SK-N-SH (cell line): ENCODE measurements at regions of chr3 and their contacts with region 1.

Region 1: DNA sequence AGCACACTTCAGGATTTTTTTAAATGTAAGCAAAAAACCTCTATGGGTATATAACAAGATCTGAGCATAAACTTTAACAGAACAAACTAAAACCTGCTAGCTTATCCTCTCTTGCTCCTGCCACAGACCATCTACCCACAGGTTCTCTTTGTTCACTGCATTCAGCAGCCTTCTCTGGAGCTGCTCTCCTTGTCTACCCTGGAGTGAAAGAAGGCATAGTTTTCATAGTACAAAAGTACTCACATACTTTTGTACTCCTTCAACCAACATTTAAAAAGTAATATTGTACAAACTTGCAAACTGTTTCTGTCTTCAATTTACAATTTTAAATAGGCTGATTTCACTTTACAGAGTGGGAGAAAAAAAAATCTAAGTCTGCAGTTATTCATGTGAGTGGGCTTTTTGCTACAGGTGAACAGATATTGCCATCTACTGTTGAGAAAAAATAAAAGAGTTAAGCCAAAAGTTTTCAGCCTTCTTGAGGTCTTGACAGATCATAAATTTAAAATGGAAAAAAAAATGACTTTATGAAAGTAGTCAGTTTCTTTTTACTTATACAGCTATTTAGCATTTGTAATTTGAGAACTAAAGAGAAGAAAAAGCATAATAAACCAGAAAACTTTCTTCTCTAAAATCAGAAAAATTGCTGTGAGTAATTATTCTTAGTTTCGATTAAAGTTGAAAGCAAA is 20.4 kb downstream of the TERC start:
- DNase-seq: no peak
- H3K4me3 ChIP-seq: no peak overlapping the region
- H3K27ac ChIP-seq: no peak overlapping the region
- H3K4me1 ChIP-seq: no peaks in the 10 kb centered on the region
- H3K27me3 ChIP-seq: peaks cover 5% of the 10 kb centered on the region; the same call in 1 of the 2 replicates
- CTCF ChIP-seq: peak; percentile 55
- EP300 ChIP-seq: no peak
- RAD21 ChIP-seq: peak; percentile 66

Region 2: GRCh38 chr3:169764452-169765274 is 20.2 kb after region 1 on chr3 and contains the start of gene TERC:
- CTCF ChIA-PET with region 1: interaction called, 13 read pairs
- POLR2A ChIA-PET with region 1: no interaction called
- DNase-seq: peak; percentile 93
- H3K4me3 ChIP-seq: peak within 1 kb of the TSS; percentile 68 to 70
- H3K27ac ChIP-seq: peak within 1 kb of the TSS; percentile 58 to 86
- H3K4me1 ChIP-seq: peaks cover 0 to 5% of the 10 kb centered on the region in 2 experiments; a peak in 1 of 4 replicates
- H3K27me3 ChIP-seq: no peaks in the 10 kb centered on the region
- CTCF ChIP-seq: no peak
- EP300 ChIP-seq: no peak
- RAD21 ChIP-seq: no peak
- polyA plus RNA-seq, gene TERC: 0.32 and 0.64 TPM in 2 replicates

Region 3: DNA sequence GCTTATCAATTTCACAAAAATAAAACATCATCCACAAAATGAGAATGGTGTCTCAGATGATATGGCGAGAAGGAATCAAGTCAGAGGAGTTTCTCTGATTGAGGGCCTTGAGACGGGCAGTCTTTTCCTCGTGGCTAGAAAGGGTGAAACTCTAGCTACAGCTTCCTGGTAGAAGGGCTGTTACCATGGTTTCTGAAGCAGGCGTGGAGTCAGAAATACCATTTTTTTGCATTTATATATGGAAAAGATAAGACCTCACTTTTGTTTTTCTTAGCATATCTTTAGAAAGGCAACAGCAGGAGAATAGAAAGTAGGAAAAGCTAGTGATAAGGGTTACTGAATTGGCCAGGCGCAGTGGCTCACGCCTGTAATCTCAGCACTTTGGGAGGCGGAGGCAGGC is 149.6 kb after region 1 on chr3:
- CTCF ChIA-PET with region 1: no interaction called
- POLR2A ChIA-PET with region 1: no interaction called
- DNase-seq: no peak
- H3K4me3 ChIP-seq: no peak overlapping the region
- H3K27ac ChIP-seq: no peak overlapping the region
- H3K4me1 ChIP-seq: no peaks in the 10 kb centered on the region
- H3K27me3 ChIP-seq: no peaks in the 10 kb centered on the region
- CTCF ChIP-seq: no peak
- EP300 ChIP-seq: no peak
- RAD21 ChIP-seq: no peak